Activated CD8-positive, alpha-beta T cell treated with anti-CD3 and anti-CD28 coated beads for 36 hours (primary cell): ENCODE measurements at regions of chrX and their contacts with region 1.

Region 1: DNA sequence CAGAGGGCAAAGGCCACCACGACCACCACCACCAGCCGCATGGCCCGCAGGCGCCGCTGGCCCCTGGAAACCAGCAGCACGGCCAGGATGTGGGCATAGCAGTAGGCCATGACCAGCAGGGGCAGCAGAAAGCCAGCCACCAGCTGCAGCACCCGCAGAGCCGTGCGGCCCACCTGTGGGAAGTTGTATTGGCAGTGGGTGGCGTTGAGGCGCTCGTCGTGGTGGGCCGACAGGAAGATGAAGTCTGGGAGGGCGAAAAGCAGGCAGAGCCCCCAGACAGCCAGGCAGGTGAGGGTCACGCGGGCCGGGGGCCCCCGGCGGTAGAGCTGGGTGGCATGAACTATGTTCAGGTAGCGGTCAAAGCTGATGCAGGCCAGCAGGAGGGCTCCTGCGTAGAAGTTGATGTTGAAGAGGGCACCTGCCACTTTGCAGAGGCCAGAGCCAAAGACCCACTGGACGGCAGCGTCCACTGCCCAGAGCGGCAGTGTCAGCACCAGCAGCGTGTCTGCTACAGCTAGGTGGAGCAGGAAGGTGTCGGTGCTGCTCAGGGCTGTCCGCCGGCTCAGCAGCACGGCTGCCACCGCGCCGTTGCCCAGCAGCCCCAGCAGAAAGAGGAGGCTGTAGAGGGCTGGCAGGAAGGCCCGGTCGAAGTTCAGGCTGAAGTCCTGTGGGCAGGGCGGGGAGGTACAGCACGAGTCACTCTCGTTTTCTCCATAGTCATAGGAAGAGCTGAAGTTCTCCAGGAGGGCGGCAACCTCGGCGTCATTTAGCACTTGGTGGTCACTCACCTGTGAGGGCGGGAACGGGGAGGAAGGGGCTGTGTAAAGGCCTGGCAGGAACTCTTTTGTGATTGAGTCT is 1.4 kb downstream of the CXCR3 start:
- DNase-seq: peak; percentile 65
- ATAC-seq: no peak
- H3K4me3 Mint-ChIP-seq: peak overlapping the region; percentile 93
- H3K27ac Mint-ChIP-seq: peak overlapping the region; percentile 89
- H3K4me1 Mint-ChIP-seq: peaks cover 54% of the 10 kb centered on the region
- H3K27me3 Mint-ChIP-seq: no peaks in the 10 kb centered on the region
- CTCF ChIP-seq: no peak

Region 2: GRCh38 chrX:71482228-71482958 is 134.5 kb before region 1 on chrX:
- CTCF ChIA-PET with region 1: no interaction called
- POLR2A ChIA-PET with region 1: no interaction called
- intact Hi-C with region 1: no loop called
- DNase-seq: no peak
- ATAC-seq: no peak
- H3K4me3 Mint-ChIP-seq: no peak overlapping the region
- H3K27ac Mint-ChIP-seq: no peak overlapping the region
- H3K4me1 Mint-ChIP-seq: no peaks in the 10 kb centered on the region
- H3K27me3 Mint-ChIP-seq: no peaks in the 10 kb centered on the region
- CTCF ChIP-seq: no peak

Region 3: GRCh38 chrX:71637848-71638247 is 20.9 kb after region 1 on chrX:
- CTCF ChIA-PET with region 1: interaction called, 3 read pairs
- POLR2A ChIA-PET with region 1: interaction called, 30 read pairs
- intact Hi-C with region 1: no loop called
- DNase-seq: peak; percentile 16
- ATAC-seq: peak; percentile 34
- H3K4me3 Mint-ChIP-seq: no peak overlapping the region
- H3K27ac Mint-ChIP-seq: no peak overlapping the region
- H3K4me1 Mint-ChIP-seq: peaks cover 26% of the 10 kb centered on the region
- H3K27me3 Mint-ChIP-seq: no peaks in the 10 kb centered on the region
- CTCF ChIP-seq: no peak

Region 4: GRCh38 chrX:71652405-71652804 is 35.5 kb after region 1 on chrX:
- CTCF ChIA-PET with region 1: interaction called, 28 read pairs
- POLR2A ChIA-PET with region 1: interaction called, 4 read pairs
- intact Hi-C with region 1: loop called (anchors 5 kb)
- DNase-seq: peak; percentile 74
- ATAC-seq: peak; percentile 70
- H3K4me3 Mint-ChIP-seq: no peak overlapping the region
- H3K27ac Mint-ChIP-seq: peak overlapping the region; percentile 49
- H3K4me1 Mint-ChIP-seq: peaks cover 29% of the 10 kb centered on the region
- H3K27me3 Mint-ChIP-seq: no peaks in the 10 kb centered on the region
- CTCF ChIP-seq: peak; percentile 42